Calu3 (cell line): ENCODE measurements at regions of chr1 and their contacts with region 1.

Region 1: DNA sequence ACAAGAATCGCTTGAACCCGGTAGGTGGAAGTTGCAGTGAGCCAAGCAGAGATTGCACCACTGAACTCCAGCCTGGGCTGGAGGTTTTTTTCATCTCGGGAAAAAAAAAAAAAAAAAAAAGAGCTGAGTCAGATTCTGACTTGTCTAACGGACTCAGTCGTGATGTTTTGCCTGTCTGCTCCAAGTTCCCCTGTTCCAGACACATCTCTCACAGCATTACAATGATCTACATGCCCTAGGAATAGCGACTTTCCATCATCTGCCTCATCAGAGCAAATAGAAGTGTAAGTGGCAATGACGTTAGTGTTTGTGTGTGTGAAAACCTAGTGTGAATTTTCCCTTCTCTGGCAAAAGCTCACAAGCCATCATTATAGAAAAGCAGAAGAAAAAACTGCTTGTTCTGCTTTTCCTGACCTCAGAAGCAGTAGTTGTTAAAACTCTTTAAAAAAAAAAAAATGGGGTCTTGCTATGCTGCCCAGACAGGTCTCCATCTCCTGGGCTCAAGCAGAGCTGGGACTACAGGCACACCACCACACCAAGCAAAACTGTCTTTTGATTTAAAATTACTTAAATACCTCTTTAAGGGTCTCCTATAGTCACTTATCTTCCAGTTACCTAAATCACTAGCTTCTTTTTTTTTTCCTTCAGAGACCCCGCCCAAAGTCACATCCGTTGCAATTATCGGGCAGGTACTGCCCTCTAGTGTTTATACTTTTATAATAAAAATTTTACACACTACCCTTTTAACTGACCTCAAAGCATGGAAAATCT is 37.3 kb downstream of the PLEKHO1 start:
- DNase-seq: peak; percentile 34
- H3K4me3 Mint-ChIP-seq: no peak overlapping the region
- H3K27ac Mint-ChIP-seq: peak overlapping the region; percentile 67
- H3K4me1 Mint-ChIP-seq: peaks cover 25% of the 10 kb centered on the region
- H3K27me3 Mint-ChIP-seq: no peaks in the 10 kb centered on the region
- CTCF ChIP-seq: peak; percentile 55

Region 2: GRCh38 chr1:149887456-149888247 is 299.3 kb before region 1 on chr1:
- CTCF ChIA-PET with region 1: interaction called, 22 read pairs
- intact Hi-C with region 1: loop called (anchors 10 kb)
- DNase-seq: peak; percentile 83
- H3K4me3 Mint-ChIP-seq: no peak overlapping the region
- H3K27ac Mint-ChIP-seq: no peak overlapping the region
- H3K4me1 Mint-ChIP-seq: no peaks in the 10 kb centered on the region
- H3K27me3 Mint-ChIP-seq: no peaks in the 10 kb centered on the region
- CTCF ChIP-seq: no peak

Region 3: DNA sequence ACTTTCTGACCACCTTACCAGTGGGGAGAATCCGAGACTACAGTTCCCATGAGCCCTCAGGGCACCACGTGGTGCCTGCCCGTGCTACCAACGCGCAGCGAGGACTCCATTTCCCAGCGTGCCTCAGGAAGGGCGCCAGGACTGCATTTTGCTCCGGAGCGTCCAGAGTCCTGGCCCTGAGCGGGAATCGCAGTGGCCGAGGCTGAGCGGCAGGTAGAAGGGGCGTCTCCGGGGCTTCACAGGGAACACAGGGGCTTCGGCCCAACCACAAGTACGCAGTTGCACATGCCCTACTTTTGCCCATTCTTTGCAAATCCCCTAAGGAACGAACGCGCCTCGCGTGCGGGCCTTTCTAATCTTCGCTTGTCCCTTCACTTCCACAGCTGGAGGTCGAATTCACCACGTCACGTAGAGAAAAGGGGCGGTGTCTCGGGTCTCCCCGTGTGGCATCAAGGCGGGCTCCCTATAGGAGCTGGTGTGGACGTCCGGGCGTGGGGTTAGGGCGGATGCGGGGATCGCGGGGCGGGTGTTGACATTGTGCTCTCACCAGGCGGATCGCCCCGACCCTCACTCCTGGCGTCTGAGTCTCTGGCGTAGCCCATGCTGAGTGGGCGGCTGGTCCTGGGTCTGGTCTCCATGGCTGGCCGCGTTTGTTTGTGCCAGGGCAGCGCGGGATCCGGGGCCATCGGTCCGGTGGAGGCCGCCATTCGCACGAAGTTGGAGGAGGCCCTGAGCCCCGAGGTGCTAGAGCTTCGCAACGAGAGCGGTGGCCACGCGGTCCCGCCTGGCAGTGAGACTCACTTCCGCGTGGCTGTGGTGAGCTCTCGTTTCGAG is 287.3 kb before region 1 on chr1 and contains the start of gene BOLA1:
- CTCF ChIA-PET with region 1: no interaction called
- intact Hi-C with region 1: loop called (anchors 10 kb)
- DNase-seq: peak; percentile 95
- H3K4me3 Mint-ChIP-seq: peak within 1 kb of the TSS; percentile 77
- H3K27ac Mint-ChIP-seq: peak within 1 kb of the TSS; percentile 77
- H3K4me1 Mint-ChIP-seq: peaks cover 19% of the 10 kb centered on the region
- H3K27me3 Mint-ChIP-seq: no peaks in the 10 kb centered on the region
- CTCF ChIP-seq: no peak
- total RNA-seq, gene BOLA1: 13.5 and 15.5 TPM in 2 replicates

Region 4: DNA sequence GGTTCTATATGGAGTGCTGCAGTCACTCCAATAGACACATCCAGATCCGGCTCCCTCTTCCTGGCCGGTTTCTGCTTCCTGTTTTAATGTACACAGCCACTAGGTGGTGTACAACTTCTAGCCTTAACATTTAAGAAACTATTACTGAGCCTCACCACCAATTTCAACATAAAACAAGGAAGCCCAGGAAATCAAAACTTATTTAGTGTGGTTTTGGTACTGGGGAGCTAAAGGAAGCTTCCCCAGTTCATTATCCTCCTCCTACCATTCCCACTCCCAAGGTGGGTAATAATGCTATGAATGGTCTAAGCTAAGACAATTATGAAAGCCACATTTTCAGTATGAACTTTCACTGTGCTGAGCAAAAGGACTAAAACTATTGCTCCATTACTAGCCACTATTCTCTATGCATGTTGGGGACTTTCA is 224.8 kb before region 1 on chr1:
- CTCF ChIA-PET with region 1: interaction called, 5 read pairs
- intact Hi-C with region 1: loop called (anchors 5 kb)
- DNase-seq: peak; percentile 64
- H3K4me3 Mint-ChIP-seq: no peak overlapping the region
- H3K27ac Mint-ChIP-seq: no peak overlapping the region
- H3K4me1 Mint-ChIP-seq: no peaks in the 10 kb centered on the region
- H3K27me3 Mint-ChIP-seq: no peaks in the 10 kb centered on the region
- CTCF ChIP-seq: peak; percentile 44

Region 5: DNA sequence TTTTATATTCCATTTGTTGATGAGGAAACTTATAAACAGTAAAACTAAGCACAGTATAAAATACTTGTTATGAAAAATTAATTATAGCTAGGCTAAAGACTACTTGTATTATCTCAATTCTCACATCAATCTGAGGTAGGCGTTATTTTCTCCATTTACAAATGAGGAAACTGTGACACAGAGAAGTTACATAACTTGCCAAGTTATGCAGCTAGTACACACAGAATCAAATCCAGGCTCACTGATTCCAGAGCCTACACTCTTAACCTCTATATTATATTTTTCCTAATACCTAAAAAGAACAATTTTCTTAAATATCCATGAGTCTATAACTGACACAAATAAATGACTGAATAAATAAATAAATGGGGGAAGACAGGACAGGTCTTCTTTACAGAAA is 130.6 kb before region 1 on chr1:
- CTCF ChIA-PET with region 1: no interaction called
- intact Hi-C with region 1: no loop called
- DNase-seq: no peak
- H3K4me3 Mint-ChIP-seq: no peak overlapping the region
- H3K27ac Mint-ChIP-seq: no peak overlapping the region
- H3K4me1 Mint-ChIP-seq: peaks cover 1% of the 10 kb centered on the region
- H3K27me3 Mint-ChIP-seq: no peaks in the 10 kb centered on the region
- CTCF ChIP-seq: no peak

Region 6: DNA sequence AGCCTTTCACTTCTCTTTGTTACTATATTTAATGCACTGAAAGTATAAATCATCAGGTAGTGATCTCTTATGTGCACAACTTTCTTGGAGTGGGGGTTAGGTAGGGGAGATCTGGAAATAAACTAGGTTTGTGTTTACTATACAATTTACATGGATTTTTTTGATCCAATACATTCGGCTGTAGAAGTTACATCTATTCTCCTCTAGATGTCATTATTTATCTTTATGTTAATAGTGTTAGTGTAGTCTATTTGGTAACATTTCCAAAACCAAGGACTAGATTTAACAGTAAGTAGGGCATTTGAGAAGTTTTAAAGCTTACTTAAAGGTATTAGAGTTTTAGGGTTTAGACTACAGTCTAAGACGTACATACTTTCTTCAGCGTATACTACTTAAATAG is 114.0 kb before region 1 on chr1:
- CTCF ChIA-PET with region 1: interaction called, 11 read pairs
- intact Hi-C with region 1: no loop called
- DNase-seq: no peak
- H3K4me3 Mint-ChIP-seq: no peak overlapping the region
- H3K27ac Mint-ChIP-seq: no peak overlapping the region
- H3K4me1 Mint-ChIP-seq: peaks cover 19% of the 10 kb centered on the region
- H3K27me3 Mint-ChIP-seq: no peaks in the 10 kb centered on the region
- CTCF ChIP-seq: peak; percentile 14

Region 7: DNA sequence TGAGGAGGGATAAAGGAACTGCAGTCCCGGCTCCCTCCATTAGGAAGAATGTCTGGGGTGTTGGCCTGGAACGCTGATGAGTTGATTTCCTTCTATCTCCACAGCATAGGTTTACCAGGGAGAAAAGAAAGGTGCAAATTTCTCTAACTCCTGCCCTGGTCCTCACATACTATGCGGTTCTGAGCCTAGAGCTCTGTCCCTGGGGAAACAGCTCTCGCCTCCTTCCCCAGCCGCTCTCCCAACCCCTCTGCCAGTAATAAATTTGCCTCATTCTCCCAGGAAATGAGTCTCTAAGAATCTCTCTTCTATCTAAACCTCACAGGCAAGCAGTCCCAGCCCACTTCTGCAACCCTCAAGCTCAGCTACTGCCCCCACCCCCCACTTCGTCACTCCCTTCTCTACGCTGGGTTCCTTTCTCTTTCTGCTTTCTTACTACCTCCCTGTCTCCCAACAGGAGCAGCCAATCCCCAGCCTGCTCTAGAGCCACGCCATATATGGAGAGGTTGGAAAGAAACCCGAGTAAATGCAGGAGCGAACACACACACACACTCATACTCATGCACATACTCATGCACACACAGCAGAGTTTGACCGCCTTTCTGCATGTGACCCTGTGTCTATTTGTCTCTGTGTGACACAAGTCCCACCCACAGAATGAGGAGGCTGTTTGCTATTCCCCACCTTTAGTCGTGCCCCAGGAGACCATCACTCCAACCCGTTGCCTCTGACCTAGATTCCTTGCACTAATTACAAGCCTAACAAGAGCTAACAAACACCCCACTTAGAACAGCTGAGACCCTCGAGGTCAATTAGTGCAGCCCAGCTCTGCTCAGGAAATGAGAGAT is 23.9 kb before region 1 on chr1:
- CTCF ChIA-PET with region 1: interaction called, 11 read pairs
- intact Hi-C with region 1: no loop called
- DNase-seq: peak; percentile 61
- H3K4me3 Mint-ChIP-seq: peak overlapping the region; percentile 27
- H3K27ac Mint-ChIP-seq: peak overlapping the region; percentile 30
- H3K4me1 Mint-ChIP-seq: peaks cover 8% of the 10 kb centered on the region
- H3K27me3 Mint-ChIP-seq: peaks cover 26% of the 10 kb centered on the region
- CTCF ChIP-seq: no peak

Region 8: DNA sequence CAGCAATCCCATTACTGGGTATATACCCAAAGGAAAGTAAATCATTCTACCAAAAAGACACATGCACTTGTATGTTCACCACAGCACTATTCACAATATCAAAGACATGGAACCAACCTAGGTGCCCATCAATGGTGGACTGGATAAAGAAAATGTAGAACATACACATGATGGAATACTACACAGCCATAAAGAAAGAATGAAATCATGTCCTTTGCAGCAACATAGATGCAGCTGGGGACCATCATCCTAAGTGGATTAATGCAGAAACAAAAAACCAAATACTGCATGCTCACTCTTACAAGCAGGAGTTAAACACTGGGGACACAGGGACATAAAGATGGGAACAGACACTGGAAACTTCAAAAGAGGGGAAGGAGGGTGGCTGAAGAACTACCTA is 40.3 kb after region 1 on chr1:
- CTCF ChIA-PET with region 1: no interaction called
- intact Hi-C with region 1: no loop called
- DNase-seq: no peak
- H3K4me3 Mint-ChIP-seq: no peak overlapping the region
- H3K27ac Mint-ChIP-seq: no peak overlapping the region
- H3K4me1 Mint-ChIP-seq: no peaks in the 10 kb centered on the region
- H3K27me3 Mint-ChIP-seq: no peaks in the 10 kb centered on the region
- CTCF ChIP-seq: no peak